ENCODE measurements at regions of chr3 and their contacts with region 1.

Region 1: DNA sequence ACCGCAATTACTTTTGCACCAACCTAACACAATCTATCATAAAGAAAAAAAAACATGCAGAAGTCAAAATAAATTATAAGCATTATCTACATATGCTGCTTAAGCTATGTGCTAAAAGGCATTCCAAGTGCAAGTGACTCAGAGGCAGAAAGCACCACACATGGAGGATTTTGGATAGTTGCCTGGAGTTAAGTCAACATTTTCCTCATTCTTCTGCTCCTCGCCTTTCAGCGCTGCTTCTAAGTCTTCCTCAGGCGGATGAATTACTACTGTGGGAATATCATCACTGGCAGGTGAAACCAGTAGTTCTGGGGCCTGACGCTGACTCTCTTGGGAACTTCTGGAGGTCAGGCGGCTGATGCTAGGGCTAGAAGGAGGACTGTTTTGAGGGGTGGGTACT is 53.1 kb downstream of the SLC4A7 start:
- DNase-seq: peak; percentile 98
- ATAC-seq: peak; percentile 97
- H3K4me3 ChIP-seq: no peak overlapping the region
- H3K27ac ChIP-seq: peak overlapping the region; percentile 53
- H3K4me1 ChIP-seq: peaks cover 17% of the 10 kb centered on the region
- H3K27me3 ChIP-seq: no peaks in the 10 kb centered on the region
- CTCF ChIP-seq: no peak

Region 2: GRCh38 chr3:27449530-27450150 is 18.5 kb after region 1 on chr3:
- CTCF ChIA-PET with region 1: no interaction called
- POLR2A ChIA-PET with region 1: no interaction called
- intact Hi-C with region 1: loop called (anchors 2 kb)
- DNase-seq: peak; percentile 75
- ATAC-seq: peak; percentile 82
- H3K4me3 ChIP-seq: no peak overlapping the region
- H3K27ac ChIP-seq: peak overlapping the region; percentile 59
- H3K4me1 ChIP-seq: peaks cover 27% of the 10 kb centered on the region
- H3K27me3 ChIP-seq: no peaks in the 10 kb centered on the region
- CTCF ChIP-seq: no peak

Region 3: GRCh38 chr3:27467545-27467944 is 36.4 kb after region 1 on chr3:
- CTCF ChIA-PET with region 1: no interaction called
- POLR2A ChIA-PET with region 1: interaction called, 3 read pairs
- intact Hi-C with region 1: loop called (anchors 5 kb)
- DNase-seq: peak; percentile 72
- ATAC-seq: peak; percentile 81
- H3K4me3 ChIP-seq: no peak overlapping the region
- H3K27ac ChIP-seq: no peak overlapping the region
- H3K4me1 ChIP-seq: 0 out of 2 replicates have a peak, but pooled peaks cover 10% of the 10 kb centered on the region
- H3K27me3 ChIP-seq: no peaks in the 10 kb centered on the region
- CTCF ChIP-seq: peak; percentile 79